ENCODE measurements at regions of chr1 and their contacts with region 1.

Region 1: DNA sequence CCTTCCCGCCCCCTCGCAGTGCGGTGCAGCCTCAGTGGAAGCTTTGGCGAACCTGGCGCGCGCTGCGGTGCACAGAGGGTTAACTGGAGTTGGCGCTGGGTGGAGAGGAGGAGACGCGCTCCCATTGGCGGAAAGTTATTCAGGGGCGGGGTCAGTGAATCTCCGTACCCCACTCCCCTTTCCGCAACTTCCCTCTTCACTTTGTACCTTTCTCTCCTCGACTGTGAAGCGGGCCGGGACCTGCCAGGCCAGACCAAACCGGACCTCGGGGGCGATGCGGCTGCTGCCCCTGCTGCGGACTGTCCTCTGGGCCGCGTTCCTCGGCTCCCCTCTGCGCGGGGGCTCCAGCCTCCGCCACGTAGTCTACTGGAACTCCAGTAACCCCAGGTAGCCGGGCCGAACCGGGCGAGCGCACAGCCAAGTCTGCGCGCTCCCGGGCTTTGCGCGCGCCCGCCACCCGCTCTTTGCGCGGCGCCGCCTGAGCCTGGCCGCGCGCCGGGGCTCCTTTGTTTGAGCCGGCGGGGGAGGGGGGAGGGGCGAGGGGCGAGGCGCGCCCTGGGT is at the start of gene EFNA4:
- DNase-seq: peak; percentile 93
- H3K4me3 ChIP-seq: peak within 1 kb of the TSS; percentile 84
- H3K27ac ChIP-seq: peak within 1 kb of the TSS; percentile 55
- H3K4me1 ChIP-seq: peaks cover 32% of the 10 kb centered on the region
- CTCF ChIP-seq: no peak
- total RNA-seq, gene EFNA4: 10.5 and 11.5 TPM in 2 replicates

Region 2: GRCh38 chr1:154558575-154559465 is 504.8 kb before region 1 on chr1 and contains the start of gene UBE2Q1:
- CTCF ChIA-PET with region 1: no interaction called
- POLR2A ChIA-PET with region 1: no interaction called
- intact Hi-C with region 1: loop called (anchors 2 kb)
- DNase-seq: peak; percentile 99
- H3K4me3 ChIP-seq: peak within 1 kb of the TSS; percentile 96
- H3K27ac ChIP-seq: peak within 1 kb of the TSS; percentile 63
- H3K4me1 ChIP-seq: peaks cover 22% of the 10 kb centered on the region
- CTCF ChIP-seq: no peak
- total RNA-seq, gene UBE2Q1: 34.6 and 54.0 TPM in 2 replicates

Region 3: GRCh38 chr1:154669464-154670282 is 394.0 kb before region 1 on chr1:
- CTCF ChIA-PET with region 1: no interaction called
- POLR2A ChIA-PET with region 1: no interaction called
- intact Hi-C with region 1: loop called (anchors 2 kb)
- DNase-seq: peak; percentile 89
- H3K4me3 ChIP-seq: no peak overlapping the region
- H3K27ac ChIP-seq: no peak overlapping the region
- H3K4me1 ChIP-seq: peaks cover 8% of the 10 kb centered on the region
- CTCF ChIP-seq: peak; percentile 97

Region 4: DNA sequence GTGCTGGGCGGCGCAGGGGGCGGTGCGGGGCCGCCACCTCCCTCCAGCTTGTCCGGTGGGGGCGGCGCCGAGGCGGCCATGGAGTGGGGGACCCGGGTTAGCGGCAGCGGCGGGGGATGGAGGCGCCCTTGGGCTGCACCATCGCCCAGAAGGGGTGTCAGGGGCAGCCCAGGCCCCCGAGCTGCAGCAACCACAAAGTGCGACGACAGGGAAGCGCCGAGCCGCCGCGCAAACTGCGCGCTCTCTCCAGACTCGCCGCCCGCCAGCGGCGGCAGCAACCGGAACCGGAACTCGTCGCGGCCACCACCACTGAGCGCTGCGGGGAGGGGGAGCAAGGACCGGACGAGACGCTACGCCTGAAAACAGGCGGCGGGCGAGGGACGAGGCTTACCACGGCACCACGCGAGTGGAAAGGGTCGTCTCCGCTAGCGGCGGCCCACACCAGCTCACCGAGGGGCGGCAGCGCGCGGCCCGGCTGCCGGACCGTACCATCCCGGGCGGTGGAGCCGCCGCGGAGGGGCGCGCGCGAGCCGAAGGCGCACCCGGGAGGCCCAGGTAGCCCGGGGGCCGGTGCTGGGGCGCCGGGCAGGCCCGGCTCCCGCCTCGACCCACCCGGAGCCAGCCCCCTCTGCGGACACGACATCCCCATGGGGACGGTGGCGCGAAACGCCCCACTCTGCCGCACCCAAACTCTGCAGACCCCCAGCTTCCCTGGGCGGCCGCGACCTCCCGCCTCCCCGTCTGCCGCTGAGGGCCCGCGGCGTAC is 102.0 kb before region 1 on chr1 and contains the start of gene PYGO2:
- CTCF ChIA-PET with region 1: no interaction called
- POLR2A ChIA-PET with region 1: no interaction called
- intact Hi-C with region 1: loop called (anchors 5 kb)
- DNase-seq: peak; percentile 88
- H3K4me3 ChIP-seq: peak within 1 kb of the TSS; percentile 82
- H3K27ac ChIP-seq: peak within 1 kb of the TSS; percentile 77
- H3K4me1 ChIP-seq: peaks cover 33% of the 10 kb centered on the region
- CTCF ChIP-seq: peak; percentile 80
- total RNA-seq, gene PYGO2: 36.5 and 44.3 TPM in 2 replicates

Region 5: DNA sequence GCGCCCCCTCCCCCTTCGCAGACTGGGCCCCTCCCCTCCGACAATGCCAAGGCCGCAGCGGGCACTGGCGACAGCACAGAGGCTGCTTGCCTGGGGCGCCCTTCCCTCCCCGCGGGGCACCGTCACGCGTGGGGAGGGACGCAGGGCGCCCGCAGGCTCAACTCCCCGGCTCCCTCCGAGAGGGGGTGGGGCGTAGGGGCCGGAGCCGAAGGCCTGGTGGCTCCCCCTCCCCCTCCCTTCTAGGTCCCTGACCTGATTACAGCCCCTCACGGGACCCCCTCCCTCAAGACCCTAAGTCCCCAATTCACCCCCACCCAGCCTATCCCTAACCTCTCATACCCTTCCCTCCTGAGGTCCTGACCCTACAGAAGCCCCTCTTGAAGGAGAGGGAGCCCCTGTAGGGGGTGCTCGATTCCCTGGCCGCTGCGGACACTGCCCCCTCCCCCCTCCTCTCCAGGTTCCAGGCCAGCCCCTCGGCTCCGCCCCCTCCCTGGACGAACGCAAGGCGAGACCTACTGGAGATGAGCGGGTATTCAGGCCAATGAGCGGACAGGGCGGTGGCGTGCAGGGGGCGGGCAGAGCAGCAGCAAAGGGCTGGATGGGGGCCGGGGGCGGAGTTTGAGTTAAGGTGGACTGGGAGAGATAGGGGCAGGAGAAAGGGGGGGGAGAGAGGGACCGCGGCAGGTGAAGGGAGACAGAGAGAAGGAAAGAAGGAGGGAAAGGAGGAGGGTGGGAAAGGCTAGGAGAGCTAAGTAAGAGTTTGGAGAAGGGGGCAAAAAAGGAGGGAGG is 61.8 kb before region 1 on chr1:
- CTCF ChIA-PET with region 1: no interaction called
- POLR2A ChIA-PET with region 1: no interaction called
- intact Hi-C with region 1: loop called (anchors 2 kb)
- DNase-seq: peak; percentile 98
- H3K4me3 ChIP-seq: peak overlapping the region; percentile 71
- H3K27ac ChIP-seq: peak overlapping the region; percentile 92
- H3K4me1 ChIP-seq: peaks cover 65% of the 10 kb centered on the region
- CTCF ChIP-seq: peak; percentile 74

Region 6: GRCh38 chr1:155044812-155045690 is 18.6 kb before region 1 on chr1:
- CTCF ChIA-PET with region 1: interaction called, 4 read pairs
- POLR2A ChIA-PET with region 1: interaction called, 3 read pairs
- intact Hi-C with region 1: loop called (anchors 2 kb)
- DNase-seq: peak; percentile 81
- H3K4me3 ChIP-seq: no peak overlapping the region
- H3K27ac ChIP-seq: no peak overlapping the region
- H3K4me1 ChIP-seq: peaks cover 11% of the 10 kb centered on the region
- CTCF ChIP-seq: peak; percentile 88